ENCODE measurements at regions of chr20 and their contacts with region 1.

Region 1: GRCh38 chr20:52518735-52519134 is 327.2 kb upstream of the ZFP64 start:
- DNase-seq: no peak
- H3K4me3 ChIP-seq: no peak overlapping the region
- H3K4me3 Mint-ChIP-seq: peak overlapping the region in 1 of 8 donors; percentile 13
- H3K27ac ChIP-seq: no peak overlapping the region
- H3K27ac Mint-ChIP-seq: no peak overlapping the region
- H3K4me1 ChIP-seq: no peaks in the 10 kb centered on the region
- H3K4me1 Mint-ChIP-seq: no peaks in the 10 kb centered on the region
- H3K27me3 ChIP-seq: no peaks in the 10 kb centered on the region
- H3K27me3 Mint-ChIP-seq: peaks cover 0 to 1% of the 10 kb centered on the region in 2 donors

Region 2: DNA sequence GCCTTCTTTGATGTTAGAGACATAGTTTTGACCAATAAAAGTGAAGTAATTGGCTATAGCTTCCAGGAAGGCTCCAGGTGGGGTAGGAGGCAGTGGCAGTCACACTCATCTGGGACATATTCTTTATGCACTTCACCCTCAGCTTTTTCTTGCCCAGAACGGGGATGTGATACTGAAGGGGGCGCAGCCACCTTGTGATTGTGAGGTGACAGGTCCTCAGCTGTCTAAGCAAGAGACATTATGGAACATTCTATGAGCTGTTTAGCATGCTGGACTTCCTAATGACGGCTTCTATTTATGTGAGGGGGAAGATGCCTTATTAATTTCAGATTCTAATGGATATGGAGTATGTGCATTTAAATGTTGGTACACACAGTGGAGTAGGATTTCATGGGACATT is 175.8 kb before region 1 on chr20:
- CTCF ChIA-PET with region 1: no interaction called
- POLR2A ChIA-PET with region 1: no interaction called
- intact Hi-C with region 1: no loop called
- DNase-seq: peak in 1 of 5 donors; percentile 4
- H3K4me3 ChIP-seq: no peak overlapping the region
- H3K4me3 Mint-ChIP-seq: no peak overlapping the region
- H3K27ac ChIP-seq: no peak overlapping the region
- H3K27ac Mint-ChIP-seq: no peak overlapping the region
- H3K4me1 ChIP-seq: no peaks in the 10 kb centered on the region
- H3K4me1 Mint-ChIP-seq: peaks cover 0 to 7% (median 0%) of the 10 kb centered on the region in 4 donors
- H3K27me3 ChIP-seq: no peaks in the 10 kb centered on the region
- H3K27me3 Mint-ChIP-seq: peaks cover 0 to 2% of the 10 kb centered on the region in 2 donors

Region 3: GRCh38 chr20:52457826-52458225 is 60.9 kb before region 1 on chr20:
- CTCF ChIA-PET with region 1: no interaction called
- POLR2A ChIA-PET with region 1: no interaction called
- intact Hi-C with region 1: loop called (anchors 10 kb)
- DNase-seq: no peak
- H3K4me3 ChIP-seq: no peak overlapping the region
- H3K4me3 Mint-ChIP-seq: no peak overlapping the region
- H3K27ac ChIP-seq: no peak overlapping the region
- H3K27ac Mint-ChIP-seq: no peak overlapping the region
- H3K4me1 ChIP-seq: no peaks in the 10 kb centered on the region
- H3K4me1 Mint-ChIP-seq: no peaks in the 10 kb centered on the region
- H3K27me3 ChIP-seq: no peaks in the 10 kb centered on the region
- H3K27me3 Mint-ChIP-seq: peaks cover 0 to 3% of the 10 kb centered on the region in 2 donors

Region 4: GRCh38 chr20:52481443-52481842 is 37.3 kb before region 1 on chr20:
- CTCF ChIA-PET with region 1: no interaction called
- POLR2A ChIA-PET with region 1: no interaction called
- intact Hi-C with region 1: no loop called
- DNase-seq: no peak
- H3K4me3 ChIP-seq: no peak overlapping the region
- H3K4me3 Mint-ChIP-seq: no peak overlapping the region
- H3K27ac ChIP-seq: no peak overlapping the region
- H3K27ac Mint-ChIP-seq: no peak overlapping the region
- H3K4me1 ChIP-seq: no peaks in the 10 kb centered on the region
- H3K4me1 Mint-ChIP-seq: peaks cover 0 to 4% (median under 1%) of the 10 kb centered on the region in 4 donors
- H3K27me3 ChIP-seq: no peaks in the 10 kb centered on the region
- H3K27me3 Mint-ChIP-seq: no peaks in the 10 kb centered on the region

Region 5: DNA sequence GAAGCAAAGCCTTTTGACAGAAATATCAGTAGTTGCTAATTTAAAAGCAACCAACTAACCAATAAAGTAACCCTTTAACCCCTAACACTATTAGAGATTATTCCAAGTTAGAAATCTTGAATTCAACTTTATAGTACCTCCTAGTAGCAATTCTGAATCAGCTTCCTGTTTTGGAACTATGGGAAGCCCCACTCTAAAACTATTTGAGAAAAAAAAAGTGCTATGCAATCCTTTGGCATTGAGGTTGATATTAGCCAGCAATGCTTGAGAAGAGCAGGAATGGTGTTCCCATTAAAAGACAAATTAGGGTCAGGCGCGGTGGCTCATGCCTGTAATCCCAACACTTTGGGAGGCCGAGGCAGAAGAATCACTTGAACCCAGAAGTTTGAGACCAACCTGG is 21.0 kb before region 1 on chr20:
- CTCF ChIA-PET with region 1: no interaction called
- POLR2A ChIA-PET with region 1: no interaction called
- intact Hi-C with region 1: no loop called
- DNase-seq: no peak
- H3K4me3 ChIP-seq: no peak overlapping the region
- H3K4me3 Mint-ChIP-seq: no peak overlapping the region
- H3K27ac ChIP-seq: no peak overlapping the region
- H3K27ac Mint-ChIP-seq: no peak overlapping the region
- H3K4me1 ChIP-seq: peaks cover 10% of the 10 kb centered on the region
- H3K4me1 Mint-ChIP-seq: peaks cover 8 to 19% (median 12%) of the 10 kb centered on the region in 4 donors
- H3K27me3 ChIP-seq: no peaks in the 10 kb centered on the region
- H3K27me3 Mint-ChIP-seq: peaks cover 2 to 6% of the 10 kb centered on the region in 2 donors